IMR-90 (cell line): ENCODE measurements at regions of chr7 and their contacts with region 1.

Region 1: GRCh38 chr7:89123915-89124314 is 328.4 kb upstream of the TEX47 start:
- DNase-seq: no peak
- ATAC-seq: no peak
- H3K4me3 ChIP-seq: no peak overlapping the region
- H3K27ac ChIP-seq: no peak overlapping the region
- H3K4me1 ChIP-seq: no peaks in the 10 kb centered on the region
- H3K27me3 ChIP-seq: no peaks in the 10 kb centered on the region
- CTCF ChIP-seq: no peak
- POLR2A ChIP-seq: no peak
- RAD21 ChIP-seq: no peak

Region 2: DNA sequence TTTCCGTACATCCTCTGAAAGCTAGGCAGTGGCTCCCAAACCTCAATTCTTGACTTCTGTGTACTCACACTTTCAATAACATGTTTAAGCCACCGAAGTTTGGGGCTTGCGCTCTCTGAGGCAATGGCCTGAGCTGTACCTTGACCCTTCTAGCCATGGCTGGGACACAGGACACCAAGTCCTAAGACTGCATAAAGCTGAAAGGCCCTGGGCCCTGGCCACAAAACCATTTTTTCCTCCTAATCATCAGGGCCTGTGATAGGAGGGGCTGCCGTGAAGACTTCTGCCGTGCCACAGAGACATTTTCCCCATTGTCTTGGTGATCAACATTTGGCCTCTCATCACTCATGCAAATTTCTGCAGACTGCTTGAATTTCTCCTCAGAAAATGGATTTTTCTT is 111.9 kb before region 1 on chr7:
- CTCF ChIA-PET with region 1: no interaction called
- POLR2A ChIA-PET with region 1: no interaction called
- dilution Hi-C with region 1: no loop called
- in situ Hi-C with region 1: no loop called
- intact Hi-C with region 1: no loop called
- DNase-seq: no peak
- ATAC-seq: no peak
- H3K4me3 ChIP-seq: no peak overlapping the region
- H3K27ac ChIP-seq: no peak overlapping the region
- H3K4me1 ChIP-seq: no peaks in the 10 kb centered on the region
- H3K27me3 ChIP-seq: no peaks in the 10 kb centered on the region
- CTCF ChIP-seq: no peak
- POLR2A ChIP-seq: no peak
- RAD21 ChIP-seq: no peak

Region 3: GRCh38 chr7:89091550-89091949 is 32.4 kb before region 1 on chr7:
- CTCF ChIA-PET with region 1: no interaction called
- POLR2A ChIA-PET with region 1: no interaction called
- dilution Hi-C with region 1: no loop called
- in situ Hi-C with region 1: no loop called
- intact Hi-C with region 1: no loop called
- DNase-seq: no peak
- ATAC-seq: no peak
- H3K4me3 ChIP-seq: no peak overlapping the region
- H3K27ac ChIP-seq: no peak overlapping the region
- H3K4me1 ChIP-seq: no peaks in the 10 kb centered on the region
- H3K27me3 ChIP-seq: no peaks in the 10 kb centered on the region
- CTCF ChIP-seq: no peak
- POLR2A ChIP-seq: no peak
- RAD21 ChIP-seq: no peak

Region 4: GRCh38 chr7:89223900-89224395 is 100.0 kb after region 1 on chr7:
- CTCF ChIA-PET with region 1: no interaction called
- POLR2A ChIA-PET with region 1: no interaction called
- dilution Hi-C with region 1: no loop called
- in situ Hi-C with region 1: no loop called
- intact Hi-C with region 1: loop called (anchors 10 kb)
- DNase-seq: no peak
- ATAC-seq: no peak
- H3K4me3 ChIP-seq: no peak overlapping the region
- H3K27ac ChIP-seq: no peak overlapping the region
- H3K4me1 ChIP-seq: no peaks in the 10 kb centered on the region
- H3K27me3 ChIP-seq: no peaks in the 10 kb centered on the region
- CTCF ChIP-seq: no peak
- POLR2A ChIP-seq: no peak
- RAD21 ChIP-seq: no peak